ENCODE measurements at regions of chr12 and their contacts with region 1.

Region 1: DNA sequence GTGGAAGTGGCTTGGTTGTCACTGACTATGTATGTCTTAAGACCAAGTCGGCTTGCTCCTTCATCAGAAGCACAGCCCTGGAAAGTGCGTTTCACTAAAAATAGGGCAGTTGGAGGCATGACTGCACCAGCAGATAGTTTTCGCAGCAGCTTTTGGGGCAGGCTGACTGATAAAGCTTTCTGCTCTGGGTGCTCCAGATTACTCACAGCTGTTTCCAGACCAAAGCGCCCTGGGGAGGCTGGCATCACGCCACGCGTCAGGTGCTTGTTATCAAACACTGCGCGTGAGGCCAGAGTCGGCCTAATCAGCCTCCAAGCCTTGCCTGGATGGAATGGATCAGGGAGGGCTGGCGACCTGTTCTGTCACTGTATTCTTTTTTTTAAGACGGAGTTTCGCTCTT is 13.3 kb upstream of the LRRC10 start:
- DNase-seq: peak; percentile 76 to 78
- ATAC-seq: peak; percentile 74 to 92 (median 88)
- H3K4me3 ChIP-seq: peak overlapping the region in 1 of 10 donors; percentile 1
- H3K27ac ChIP-seq: peak overlapping the region in 7 of 10 donors; percentile 16 to 81 (median 72)
- H3K4me1 ChIP-seq: peaks cover 0 to 26% (median 0%) of the 10 kb centered on the region in 9 donors
- H3K27me3 ChIP-seq: no peaks in the 10 kb centered on the region
- CTCF ChIP-seq: no peak

Region 2: GRCh38 chr12:69173368-69173767 is 450.6 kb before region 1 on chr12:
- intact Hi-C with region 1: loop called in 1 of 10 experiments (anchors 10 kb)
- DNase-seq: no peak
- ATAC-seq: peak in 3 of 8 donors; percentile 33 to 49 (median 46)
- H3K4me3 ChIP-seq: no peak overlapping the region
- H3K27ac ChIP-seq: no peak overlapping the region
- H3K4me1 ChIP-seq: no peaks in the 10 kb centered on the region
- H3K27me3 ChIP-seq: no peaks in the 10 kb centered on the region
- CTCF ChIP-seq: no peak